ENCODE measurements at regions of chr5 and their contacts with region 1.

Region 1: DNA sequence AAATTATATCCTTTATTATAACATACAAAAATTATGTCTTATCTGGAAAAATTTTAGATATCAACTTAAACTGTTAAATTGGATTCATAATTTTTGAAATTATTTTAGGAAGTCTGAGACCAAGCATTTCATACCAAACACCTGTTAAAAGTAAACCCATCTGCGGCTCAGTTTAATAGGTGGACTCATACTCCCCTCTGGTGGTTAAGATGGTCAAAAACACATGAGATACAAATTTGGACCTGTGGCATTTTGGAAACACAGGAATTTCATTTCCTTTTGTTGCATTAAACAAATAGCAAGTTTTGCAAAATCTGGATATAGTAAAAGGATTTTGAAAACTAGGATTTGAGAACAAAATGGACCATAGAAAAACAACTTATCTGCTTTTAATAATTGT is 53.7 kb downstream of the RGMB start:
- DNase-seq: peak; percentile 17 to 57
- H3K4me3 ChIP-seq: no peak overlapping the region
- H3K27ac ChIP-seq: no peak overlapping the region
- H3K4me1 ChIP-seq: no peaks in the 10 kb centered on the region
- H3K27me3 ChIP-seq: no peaks in the 10 kb centered on the region
- CTCF ChIP-seq: peak; percentile 78

Region 2: DNA sequence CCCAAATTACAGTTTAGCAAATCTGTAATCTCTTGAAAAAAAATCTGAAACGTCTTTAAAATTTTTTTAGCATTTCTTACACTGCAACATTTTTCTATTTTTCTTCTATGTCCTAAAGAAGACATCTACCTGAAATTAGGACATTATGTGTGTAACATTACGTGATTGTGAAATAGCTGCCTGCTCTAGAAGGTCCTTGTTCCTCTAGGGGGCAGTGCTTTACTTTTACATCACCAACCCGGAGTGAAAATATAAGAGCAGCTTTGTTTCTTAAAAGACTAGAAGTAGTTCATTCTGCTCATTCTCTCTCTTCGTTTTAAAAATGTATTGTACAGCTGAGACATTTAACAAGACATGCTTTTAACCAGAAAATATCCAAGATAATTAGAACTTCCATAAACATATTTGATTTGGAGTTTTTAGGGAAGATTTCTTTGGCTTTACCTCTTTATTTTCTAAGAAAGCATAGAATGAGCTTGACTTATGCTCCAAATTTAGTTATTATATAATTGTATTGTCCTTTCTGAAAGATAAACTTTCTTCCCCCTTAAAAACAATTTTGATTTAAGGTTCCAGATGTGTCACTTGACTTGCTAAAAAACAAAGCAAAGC is 1596.0 kb before region 1 on chr5:
- CTCF ChIA-PET with region 1: no interaction called
- POLR2A ChIA-PET with region 1: no interaction called
- intact Hi-C with region 1: loop called (anchors 2 kb)
- DNase-seq: peak in 1 of 2 experiments; percentile 62
- H3K4me3 ChIP-seq: no peak overlapping the region
- H3K27ac ChIP-seq: no peak overlapping the region
- H3K4me1 ChIP-seq: peaks cover 21% of the 10 kb centered on the region
- H3K27me3 ChIP-seq: no peaks in the 10 kb centered on the region
- CTCF ChIP-seq: peak; percentile 89

Region 3: DNA sequence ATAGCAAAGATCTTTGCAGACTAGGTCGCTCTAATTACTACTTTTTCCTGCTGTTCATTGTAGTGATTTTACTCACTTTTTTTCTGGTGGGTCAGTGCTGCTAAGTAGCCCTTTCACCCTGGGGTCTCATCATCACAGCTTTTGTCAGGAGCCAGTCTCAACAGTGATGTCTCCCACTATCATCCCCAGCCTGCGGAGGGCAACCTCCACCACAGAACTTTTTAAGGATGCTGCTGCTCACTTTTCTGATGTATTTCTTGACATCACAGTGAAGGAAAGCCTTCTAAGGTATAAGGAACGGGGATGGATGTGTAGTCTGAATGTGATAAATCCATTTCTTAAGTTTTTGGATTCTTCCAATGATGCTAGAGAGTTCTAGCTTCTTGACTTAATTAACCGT is 1401.7 kb before region 1 on chr5:
- CTCF ChIA-PET with region 1: no interaction called
- POLR2A ChIA-PET with region 1: no interaction called
- intact Hi-C with region 1: loop called (anchors 10 kb)
- DNase-seq: peak in 1 of 2 experiments; percentile 2
- H3K4me3 ChIP-seq: no peak overlapping the region
- H3K27ac ChIP-seq: no peak overlapping the region
- H3K4me1 ChIP-seq: no peaks in the 10 kb centered on the region
- H3K27me3 ChIP-seq: no peaks in the 10 kb centered on the region
- CTCF ChIP-seq: 0 out of 2 replicates have a peak, but pooled peaks have one; percentile 26

Region 4: DNA sequence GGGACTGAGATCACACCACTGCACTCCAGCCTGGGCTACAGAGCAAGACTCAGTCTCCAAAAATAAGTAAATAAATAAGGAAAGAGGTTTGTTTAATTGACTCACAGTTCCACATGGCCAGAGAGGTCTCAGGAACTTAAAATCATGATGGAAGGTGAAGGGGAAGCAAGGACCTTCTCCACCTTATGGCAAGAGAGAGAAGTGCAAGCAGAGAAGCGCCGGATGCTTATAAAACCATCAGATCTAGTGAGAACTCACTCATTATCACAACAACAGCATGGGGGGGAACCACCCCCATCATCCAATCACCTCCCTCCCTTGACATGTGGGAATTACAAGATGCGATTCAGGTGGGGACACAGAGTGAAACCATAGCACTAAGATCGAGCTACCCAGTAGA is 76.5 kb before region 1 on chr5:
- CTCF ChIA-PET with region 1: no interaction called
- POLR2A ChIA-PET with region 1: no interaction called
- intact Hi-C with region 1: no loop called
- DNase-seq: no peak
- H3K4me3 ChIP-seq: no peak overlapping the region
- H3K27ac ChIP-seq: no peak overlapping the region
- H3K4me1 ChIP-seq: peaks cover 17% of the 10 kb centered on the region
- H3K27me3 ChIP-seq: no peaks in the 10 kb centered on the region
- CTCF ChIP-seq: peak; percentile 34; the same call in 1 of the 2 replicates

Measured in PC-9 (cell line).